Heart right ventricle (tissue), 16 donors: ENCODE measurements at regions of chr2 and their contacts with region 1.

Region 1: DNA sequence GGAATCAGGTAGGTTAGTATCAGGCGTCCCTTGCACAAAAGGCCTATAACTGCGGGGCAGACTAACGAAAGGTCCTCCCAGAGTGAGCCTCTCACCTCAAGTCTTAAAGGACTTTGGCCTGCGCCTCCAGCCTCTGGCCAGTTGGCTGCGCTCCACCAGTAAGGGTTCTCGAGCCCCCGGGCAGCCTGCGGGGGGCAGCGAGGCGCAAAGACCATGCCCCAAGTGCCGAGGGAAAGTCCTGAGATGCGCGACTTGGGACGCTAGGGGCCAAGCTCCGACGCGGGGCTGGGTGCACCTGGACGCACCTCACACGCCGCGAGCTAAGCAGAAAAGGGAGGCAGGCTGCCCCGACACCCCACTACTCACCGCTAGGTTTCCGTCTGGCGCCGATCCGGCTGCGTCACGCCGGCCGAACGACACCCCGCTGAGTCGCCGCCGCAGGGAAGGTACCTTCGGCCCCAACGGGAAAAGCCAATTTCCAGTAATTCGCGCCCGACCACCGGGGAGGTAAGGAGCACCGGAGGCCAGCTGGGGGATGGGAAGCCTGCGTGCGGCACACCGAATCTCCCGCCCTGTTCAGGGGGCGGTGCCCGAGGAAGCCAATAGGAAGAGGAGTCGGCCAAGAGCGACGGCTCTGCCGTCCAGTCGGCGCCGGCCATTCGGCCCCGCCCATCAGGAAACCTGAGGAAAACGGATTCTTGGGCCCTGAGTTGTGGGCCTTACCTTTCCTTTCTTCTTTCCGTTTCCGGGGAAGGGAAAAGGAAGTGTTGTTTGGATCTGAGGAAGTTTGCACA is at the start of gene ORC2:
- DNase-seq: peak; percentile 95
- ATAC-seq: peak; percentile 99 to 100 (median 99)
- H3K4me3 ChIP-seq: peak within 1 kb of the TSS; percentile 62 to 96 (median 89)
- H3K27ac ChIP-seq: peak within 1 kb of the TSS; percentile 80 to 93 (median 91)
- H3K4me1 ChIP-seq: peaks cover 0 to 53% (median 41%) of the 10 kb centered on the region in 9 donors
- H3K27me3 ChIP-seq: no peaks in the 10 kb centered on the region
- CTCF ChIP-seq: peak; percentile 0 to 69 (median 54)
- total RNA-seq, gene ORC2: 18.6 to 38.8 (median 27.5) TPM

Region 2: DNA sequence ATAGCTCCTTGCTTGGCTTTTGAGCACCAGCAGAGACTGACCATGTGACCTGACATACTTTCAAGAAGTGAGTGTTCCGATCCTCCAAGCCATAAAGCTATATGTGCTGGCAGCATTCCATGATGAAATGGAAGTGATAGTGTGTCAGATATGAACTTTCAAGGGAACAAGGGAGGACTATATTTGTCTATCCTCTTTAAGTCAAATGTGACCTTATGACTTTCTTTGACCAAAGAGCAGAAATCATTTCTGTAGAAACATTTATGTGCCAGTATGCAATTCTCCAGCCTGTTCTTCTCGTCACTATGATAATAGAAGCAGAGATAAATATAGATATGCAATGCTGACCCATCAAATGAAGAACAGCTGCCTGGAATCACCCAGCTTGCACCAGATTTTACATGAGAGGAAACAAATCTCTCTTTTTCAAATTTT is 93.8 kb after region 1 on chr2:
- intact Hi-C with region 1: no loop called
- DNase-seq: no peak
- ATAC-seq: peak in 1 of 8 donors; percentile 24
- H3K4me3 ChIP-seq: no peak overlapping the region
- H3K27ac ChIP-seq: peak overlapping the region in 5 of 10 donors; percentile 4 to 57 (median 36)
- H3K4me1 ChIP-seq: peaks cover 0 to 42% (median 28%) of the 10 kb centered on the region in 9 donors
- H3K27me3 ChIP-seq: no peaks in the 10 kb centered on the region
- CTCF ChIP-seq: no peak

Region 3: GRCh38 chr2:201158111-201158929 is 195.0 kb after region 1 on chr2:
- intact Hi-C with region 1: loop called in 1 of 10 experiments (anchors 10 kb)
- DNase-seq: peak in 1 of 2 donors; percentile 72
- ATAC-seq: peak; percentile 80 to 88 (median 84)
- H3K4me3 ChIP-seq: no peak overlapping the region
- H3K27ac ChIP-seq: peak overlapping the region in 9 of 10 donors; percentile 29 to 86 (median 53)
- H3K4me1 ChIP-seq: peaks cover 7 to 68% (median 34%) of the 10 kb centered on the region in 9 donors
- H3K27me3 ChIP-seq: no peaks in the 10 kb centered on the region
- CTCF ChIP-seq: peak; percentile 31 to 81 (median 66)